PC-9 (cell line): ENCODE measurements at regions of chr6 and their contacts with region 1.

Region 1: GRCh38 chr6:47733879-47734558 is 35.6 kb downstream of the ADGRF4 start:
- DNase-seq: no peak
- H3K4me3 ChIP-seq: no peak overlapping the region
- H3K27ac ChIP-seq: no peak overlapping the region
- H3K4me1 ChIP-seq: peaks cover 20% of the 10 kb centered on the region
- H3K27me3 ChIP-seq: no peaks in the 10 kb centered on the region
- CTCF ChIP-seq: peak; percentile 74

Region 2: DNA sequence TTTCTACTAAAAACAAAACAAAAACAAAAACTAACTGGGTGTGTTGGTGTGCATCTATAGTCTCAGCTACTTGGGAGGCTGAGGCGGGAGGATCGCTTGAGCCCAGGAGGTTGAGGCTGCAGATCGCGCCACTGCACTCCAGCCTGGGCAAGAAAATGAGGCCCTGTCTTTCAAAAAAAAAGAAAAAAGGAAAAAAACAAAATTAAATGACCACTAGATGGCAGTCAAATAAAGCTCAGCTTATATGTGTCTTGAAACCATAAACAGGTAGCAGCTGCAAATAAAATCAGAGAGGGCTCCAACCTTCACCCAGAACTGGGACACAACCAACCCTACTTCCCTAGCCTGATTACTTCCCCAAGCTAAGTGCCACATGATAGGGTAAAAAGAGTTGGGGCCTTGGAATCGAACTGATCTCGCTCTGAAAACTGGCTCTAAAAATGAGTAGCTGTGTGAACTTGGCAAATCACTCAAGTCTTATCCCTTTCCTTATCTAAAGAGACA is 102.7 kb before region 1 on chr6:
- CTCF ChIA-PET with region 1: interaction called, 22 read pairs
- POLR2A ChIA-PET with region 1: interaction called, 3 read pairs
- intact Hi-C with region 1: loop called (anchors 1 kb)
- DNase-seq: peak; percentile 18 to 70
- H3K4me3 ChIP-seq: no peak overlapping the region
- H3K27ac ChIP-seq: no peak overlapping the region
- H3K4me1 ChIP-seq: peaks cover 5% of the 10 kb centered on the region
- H3K27me3 ChIP-seq: no peaks in the 10 kb centered on the region
- CTCF ChIP-seq: peak; percentile 89